ENCODE measurements at regions of chr1 and their contacts with region 1.

Region 1: GRCh38 chr1:203638950-203639349 is 12.3 kb downstream of the ATP2B4 start:
- DNase-seq: peak in 2 of 4 experiments; percentile 50 to 57
- ATAC-seq: peak; percentile 79
- H3K4me3 ChIP-seq: no peak overlapping the region
- H3K27ac ChIP-seq: no peak overlapping the region
- H3K4me1 ChIP-seq: peaks cover 11 to 21% of the 10 kb centered on the region in 2 experiments; a peak in 4 of 5 replicates
- H3K27me3 ChIP-seq: no peaks in the 10 kb centered on the region; a peak in 1 of 5 replicates
- CTCF ChIP-seq: peak; percentile 14 to 64 (median 35); a peak in 4 of 6 replicates
- EP300 ChIP-seq: 0 out of 2 replicates have a peak, but pooled peaks have one; percentile 3
- POLR2A ChIP-seq: no peak
- RAD21 ChIP-seq: peak; percentile 67 to 87

Region 2: DNA sequence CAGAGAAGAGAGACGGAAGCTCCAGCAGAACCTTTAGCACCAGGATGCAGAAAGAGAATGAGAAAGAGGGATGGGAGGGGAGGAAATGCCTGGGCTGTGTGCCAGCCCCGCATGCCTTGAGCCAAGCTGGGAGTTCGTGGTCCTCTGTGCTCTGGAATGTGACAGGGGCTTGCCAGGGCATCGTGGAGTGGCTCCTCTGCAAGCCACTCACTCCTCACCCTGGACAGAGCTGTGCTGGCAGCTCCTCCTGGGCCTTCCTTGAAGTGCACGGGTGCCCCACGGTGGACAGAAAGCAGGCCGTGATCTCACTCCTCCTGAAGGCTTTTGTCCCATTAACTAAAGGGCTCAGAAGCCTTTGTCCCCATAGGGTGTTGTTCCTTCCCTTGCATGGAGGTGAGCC is 198.2 kb before region 1 on chr1:
- CTCF ChIA-PET with region 1: no interaction called
- POLR2A ChIA-PET with region 1: no interaction called
- in situ Hi-C with region 1: no loop called
- intact Hi-C with region 1: no loop called
- DNase-seq: peak in 1 of 4 experiments; percentile 24
- ATAC-seq: peak; percentile 68
- H3K4me3 ChIP-seq: no peak overlapping the region
- H3K27ac ChIP-seq: no peak overlapping the region
- H3K4me1 ChIP-seq: no peaks in the 10 kb centered on the region
- H3K27me3 ChIP-seq: peaks cover 16 to 39% of the 10 kb centered on the region in 2 experiments; a peak in 3 of 5 replicates
- CTCF ChIP-seq: peak; percentile 28 to 48 (median 47); a peak in 4 of 6 replicates
- EP300 ChIP-seq: no peak
- POLR2A ChIP-seq: no peak
- RAD21 ChIP-seq: peak; percentile 49 to 64

Region 3: GRCh38 chr1:203649999-203650855 is 11.3 kb after region 1 on chr1:
- CTCF ChIA-PET with region 1: no interaction called
- POLR2A ChIA-PET with region 1: interaction called, 11 read pairs
- in situ Hi-C with region 1: no loop called
- intact Hi-C with region 1: no loop called
- DNase-seq: peak; percentile 89 to 93 (median 90)
- ATAC-seq: peak; percentile 99
- H3K4me3 ChIP-seq: no peak overlapping the region
- H3K27ac ChIP-seq: peak overlapping the region; percentile 51; the same call in 1 of the 3 replicates
- H3K4me1 ChIP-seq: peaks cover 28 to 35% of the 10 kb centered on the region in 2 experiments
- H3K27me3 ChIP-seq: no peaks in the 10 kb centered on the region
- CTCF ChIP-seq: peak in 2 of 3 experiments; percentile 22 to 61; a peak in 3 of 6 replicates
- EP300 ChIP-seq: peak; percentile 84
- POLR2A ChIP-seq: peak; percentile 49; the same call in 1 of the 2 replicates
- RAD21 ChIP-seq: peak in 1 of 2 experiments; percentile 17; a peak in 2 of 4 replicates